ENCODE measurements at regions of chr11 and their contacts with region 1.

Region 1: GRCh38 chr11:12043959-12044819 is 35.8 kb upstream of the DKK3 start:
- DNase-seq: peak; percentile 82 to 88 (median 85)
- H3K4me3 ChIP-seq: peak overlapping the region in 1 of 3 donors; percentile 23
- H3K27ac ChIP-seq: peak overlapping the region in 1 of 2 donors; percentile 45
- H3K4me1 ChIP-seq: peaks cover 0 to 2% (median 0%) of the 10 kb centered on the region in 3 donors
- H3K27me3 ChIP-seq: no peaks in the 10 kb centered on the region
- CTCF ChIP-seq: peak; percentile 93

Region 2: GRCh38 chr11:11798586-11799438 is 245.4 kb before region 1 on chr11:
- intact Hi-C with region 1: loop called (anchors 10 kb)
- DNase-seq: peak; percentile 54 to 89 (median 82)
- H3K4me3 ChIP-seq: no peak overlapping the region
- H3K27ac ChIP-seq: no peak overlapping the region
- H3K4me1 ChIP-seq: no peaks in the 10 kb centered on the region
- H3K27me3 ChIP-seq: no peaks in the 10 kb centered on the region
- CTCF ChIP-seq: peak; percentile 81

Region 3: GRCh38 chr11:11931461-11932055 is 112.6 kb before region 1 on chr11:
- intact Hi-C with region 1: loop called (anchors 10 kb)
- DNase-seq: peak in 2 of 5 donors; percentile 44 to 77
- H3K4me3 ChIP-seq: no peak overlapping the region
- H3K27ac ChIP-seq: no peak overlapping the region
- H3K4me1 ChIP-seq: no peaks in the 10 kb centered on the region
- H3K27me3 ChIP-seq: no peaks in the 10 kb centered on the region
- CTCF ChIP-seq: peak; percentile 53

Region 4: GRCh38 chr11:12281571-12282478 is 237.6 kb after region 1 on chr11:
- intact Hi-C with region 1: loop called (anchors 5 kb)
- DNase-seq: peak; percentile 86 to 92 (median 91)
- H3K4me3 ChIP-seq: no peak overlapping the region
- H3K27ac ChIP-seq: no peak overlapping the region
- H3K4me1 ChIP-seq: no peaks in the 10 kb centered on the region
- H3K27me3 ChIP-seq: no peaks in the 10 kb centered on the region
- CTCF ChIP-seq: peak; percentile 99